IMR-90 (cell line): ENCODE measurements at regions of chr6 and their contacts with region 1.

Region 1: DNA sequence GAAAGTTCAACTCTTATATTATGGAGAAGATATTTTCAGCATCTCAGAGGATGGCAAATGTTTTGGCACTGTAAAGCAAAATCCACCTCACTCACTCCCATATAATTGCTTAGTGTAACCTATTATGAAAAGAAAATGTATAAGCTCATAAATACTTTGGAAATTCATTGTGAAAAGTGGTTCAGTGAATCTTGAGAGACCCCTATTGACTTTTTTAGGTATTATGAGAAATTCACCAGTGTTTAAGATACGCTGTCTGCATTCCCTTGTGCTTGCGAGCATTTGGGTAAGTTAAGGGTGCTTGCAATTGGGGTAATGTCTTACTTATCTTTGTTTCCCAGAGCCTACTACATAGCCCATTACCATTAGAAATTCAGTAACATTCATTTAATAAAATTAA is 66.3 kb upstream of the BMP5 start:
- DNase-seq: peak; percentile 37
- ATAC-seq: peak; percentile 49; the same call in 1 of the 2 replicates
- H3K4me3 ChIP-seq: no peak overlapping the region
- H3K27ac ChIP-seq: no peak overlapping the region
- H3K4me1 ChIP-seq: peaks cover 4% of the 10 kb centered on the region
- H3K27me3 ChIP-seq: no peaks in the 10 kb centered on the region
- CTCF ChIP-seq: peak; percentile 59
- POLR2A ChIP-seq: no peak
- RAD21 ChIP-seq: peak; percentile 67

Region 2: DNA sequence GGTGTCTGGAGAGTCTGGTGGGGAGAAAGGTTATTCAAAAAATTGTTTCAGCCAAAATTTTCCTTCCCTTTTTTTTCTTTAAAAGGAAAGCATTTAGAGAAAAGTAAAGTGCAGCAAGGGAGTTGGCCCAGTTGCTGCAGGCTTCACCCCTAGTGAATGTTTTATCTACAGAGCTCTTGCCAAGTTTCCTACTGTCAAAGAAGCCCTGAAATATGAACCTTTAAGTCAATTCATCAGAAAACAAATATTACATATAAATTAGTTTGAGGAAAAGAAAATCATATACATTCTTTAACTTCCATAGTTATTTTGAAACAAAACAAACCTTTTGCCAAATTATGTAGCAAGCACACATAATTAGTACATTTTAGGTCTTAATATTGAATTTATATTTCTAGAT is 337.7 kb before region 1 on chr6:
- CTCF ChIA-PET with region 1: no interaction called
- POLR2A ChIA-PET with region 1: no interaction called
- dilution Hi-C with region 1: no loop called
- in situ Hi-C with region 1: no loop called
- intact Hi-C with region 1: loop called (anchors 5 kb)
- DNase-seq: no peak
- ATAC-seq: no peak
- H3K4me3 ChIP-seq: no peak overlapping the region
- H3K27ac ChIP-seq: no peak overlapping the region
- H3K4me1 ChIP-seq: no peaks in the 10 kb centered on the region; the same call in 1 of the 2 replicates
- H3K27me3 ChIP-seq: no peaks in the 10 kb centered on the region
- CTCF ChIP-seq: no peak
- POLR2A ChIP-seq: no peak
- RAD21 ChIP-seq: no peak

Region 3: DNA sequence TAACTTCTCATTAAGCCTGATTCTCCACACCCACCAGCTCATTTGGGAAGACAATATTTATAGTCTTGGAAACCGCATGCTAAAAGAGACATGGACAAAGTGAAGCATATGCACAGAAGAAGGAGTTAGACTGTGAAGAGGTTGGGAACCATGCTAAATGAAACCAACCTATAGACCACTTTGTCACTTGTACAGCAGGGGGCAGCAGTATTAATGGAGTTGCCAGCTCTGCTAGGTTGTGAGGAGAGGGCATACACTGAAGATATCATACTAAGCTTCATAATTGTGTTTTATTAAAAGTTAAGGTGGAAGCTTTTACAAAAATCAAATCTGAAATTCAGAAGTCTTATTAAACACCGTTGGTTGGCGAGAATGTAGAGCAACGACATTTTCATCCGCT is 324.4 kb before region 1 on chr6:
- CTCF ChIA-PET with region 1: no interaction called
- POLR2A ChIA-PET with region 1: no interaction called
- dilution Hi-C with region 1: no loop called
- in situ Hi-C with region 1: loop called (anchors 10 kb)
- intact Hi-C with region 1: loop called (anchors 1 kb)
- DNase-seq: peak; percentile 56
- ATAC-seq: peak; percentile 67; the same call in 1 of the 2 replicates
- H3K4me3 ChIP-seq: no peak overlapping the region
- H3K27ac ChIP-seq: no peak overlapping the region
- H3K4me1 ChIP-seq: no peaks in the 10 kb centered on the region
- H3K27me3 ChIP-seq: no peaks in the 10 kb centered on the region
- CTCF ChIP-seq: peak; percentile 67
- POLR2A ChIP-seq: no peak
- RAD21 ChIP-seq: peak; percentile 64

Region 4: DNA sequence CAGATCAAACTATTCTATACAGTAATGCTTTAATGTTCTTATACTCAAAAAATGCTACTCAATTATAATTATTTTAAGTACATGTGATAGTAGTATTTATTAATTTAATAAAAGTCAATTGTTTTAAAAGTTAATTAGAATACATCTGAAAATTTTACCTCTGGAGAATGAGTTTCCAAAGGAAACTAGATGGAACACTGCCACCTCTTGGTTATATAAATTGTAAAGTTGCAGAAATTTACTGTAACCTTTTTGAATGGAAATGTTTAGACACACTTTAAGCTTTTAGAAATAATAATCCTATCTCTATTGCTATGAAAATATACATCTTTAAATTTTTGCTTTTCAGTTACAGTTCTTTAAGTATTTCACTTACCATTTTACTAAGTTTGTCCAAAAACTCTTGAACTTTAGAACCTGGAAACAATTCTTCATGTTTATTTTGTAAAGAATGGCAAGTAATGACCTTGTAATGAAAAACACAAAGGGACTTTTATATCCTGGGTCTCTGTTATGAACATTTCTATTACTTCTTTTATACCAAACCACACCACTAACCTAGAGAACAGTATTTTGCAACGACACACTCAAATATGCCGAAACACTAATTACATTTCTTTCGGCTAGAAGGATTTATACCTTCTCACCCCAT is 55.4 kb before region 1 on chr6:
- CTCF ChIA-PET with region 1: no interaction called
- POLR2A ChIA-PET with region 1: no interaction called
- dilution Hi-C with region 1: no loop called
- in situ Hi-C with region 1: no loop called
- intact Hi-C with region 1: loop called (anchors 2 kb)
- DNase-seq: peak; percentile 24
- ATAC-seq: no peak; the same call in 1 of the 2 replicates
- H3K4me3 ChIP-seq: no peak overlapping the region
- H3K27ac ChIP-seq: peak overlapping the region; percentile 78; the same call in 1 of the 2 replicates
- H3K4me1 ChIP-seq: 0 out of 2 replicates have a peak, but pooled peaks cover 2% of the 10 kb centered on the region
- H3K27me3 ChIP-seq: no peaks in the 10 kb centered on the region
- CTCF ChIP-seq: peak; percentile 57
- POLR2A ChIP-seq: no peak
- RAD21 ChIP-seq: peak; percentile 60

Region 5: DNA sequence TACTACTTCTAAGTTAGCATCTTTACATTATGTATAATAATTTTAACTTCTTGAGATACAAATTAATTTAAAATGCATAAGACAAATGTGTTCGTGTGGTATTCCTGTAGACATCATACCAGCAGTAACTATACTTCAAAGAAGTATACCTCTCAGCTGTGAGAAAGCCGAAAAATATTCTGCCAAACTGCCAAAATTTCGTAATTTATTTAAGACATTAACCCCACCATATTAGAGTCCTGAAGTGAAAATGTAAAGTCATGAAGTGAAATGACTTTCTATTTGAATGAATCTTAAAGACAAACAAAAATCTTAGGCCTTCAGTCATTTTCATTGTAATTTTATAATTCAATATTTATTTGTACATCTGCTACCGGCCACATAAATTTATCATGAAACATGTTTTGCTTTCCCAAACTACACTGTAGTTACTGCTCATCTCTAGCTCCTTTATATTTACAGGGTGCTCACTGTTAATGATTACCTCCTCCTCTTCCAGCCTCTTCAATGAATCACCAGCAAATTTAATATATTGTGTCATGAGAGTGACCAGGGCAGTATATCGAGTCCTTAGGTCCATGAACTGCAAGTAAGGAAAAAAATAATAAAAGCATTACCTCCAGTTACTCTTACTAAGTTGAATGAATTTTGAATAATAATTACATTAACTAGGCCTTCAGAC is 682.5 kb after region 1 on chr6:
- CTCF ChIA-PET with region 1: no interaction called
- POLR2A ChIA-PET with region 1: no interaction called
- dilution Hi-C with region 1: no loop called
- in situ Hi-C with region 1: no loop called
- intact Hi-C with region 1: no loop called
- DNase-seq: no peak
- ATAC-seq: no peak
- H3K4me3 ChIP-seq: no peak overlapping the region
- H3K27ac ChIP-seq: no peak overlapping the region
- H3K4me1 ChIP-seq: no peaks in the 10 kb centered on the region; the same call in 1 of the 2 replicates
- H3K27me3 ChIP-seq: no peaks in the 10 kb centered on the region
- CTCF ChIP-seq: no peak
- POLR2A ChIP-seq: no peak
- RAD21 ChIP-seq: no peak